Left cardiac atrium (tissue), 4 donors: ENCODE measurements at regions of chr16 and their contacts with region 1.

Region 1: DNA sequence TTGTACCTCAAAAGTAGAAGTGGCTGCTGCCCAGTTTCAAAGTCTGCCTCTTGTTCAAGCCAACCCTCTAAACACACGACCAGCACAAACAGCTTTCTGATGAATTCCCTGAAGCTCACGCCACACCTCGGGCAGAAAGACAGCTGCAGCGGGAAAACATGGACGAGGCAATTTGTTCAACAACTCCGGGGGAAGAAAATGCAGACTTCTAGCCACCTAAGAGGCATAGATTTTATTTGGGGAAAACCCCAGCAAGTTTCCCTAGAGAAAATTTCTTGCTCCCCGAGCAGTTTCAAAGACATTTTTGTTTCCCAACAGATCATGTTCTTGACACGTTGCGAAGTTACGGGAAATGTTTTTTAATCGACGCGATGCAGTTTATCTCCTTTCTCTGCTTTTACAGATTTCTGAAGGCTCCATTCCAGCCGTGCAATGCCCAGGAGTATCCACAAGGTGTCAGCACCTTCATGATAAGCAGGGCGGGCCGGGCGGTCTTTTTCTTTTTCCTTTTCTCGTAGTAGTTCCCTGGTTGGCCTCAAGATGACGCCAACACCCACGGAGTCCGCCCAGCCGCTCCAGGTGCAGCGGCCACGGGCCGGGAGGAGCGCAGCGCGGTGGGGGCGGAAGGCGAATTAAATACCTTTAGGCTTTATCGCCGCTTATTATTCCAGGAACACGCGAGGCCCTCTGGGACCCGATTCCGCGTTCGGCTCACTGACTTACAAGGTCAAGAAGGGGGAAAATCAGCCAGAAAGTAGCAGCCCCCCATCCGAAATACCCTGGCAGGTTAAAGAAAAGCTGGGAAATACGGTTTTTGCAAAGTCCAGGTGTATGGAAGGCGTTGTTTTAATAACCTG is 2.9 kb upstream of the FOXC2 start:
- DNase-seq: peak; percentile 90
- ATAC-seq: peak; percentile 56 to 74

Region 2: DNA sequence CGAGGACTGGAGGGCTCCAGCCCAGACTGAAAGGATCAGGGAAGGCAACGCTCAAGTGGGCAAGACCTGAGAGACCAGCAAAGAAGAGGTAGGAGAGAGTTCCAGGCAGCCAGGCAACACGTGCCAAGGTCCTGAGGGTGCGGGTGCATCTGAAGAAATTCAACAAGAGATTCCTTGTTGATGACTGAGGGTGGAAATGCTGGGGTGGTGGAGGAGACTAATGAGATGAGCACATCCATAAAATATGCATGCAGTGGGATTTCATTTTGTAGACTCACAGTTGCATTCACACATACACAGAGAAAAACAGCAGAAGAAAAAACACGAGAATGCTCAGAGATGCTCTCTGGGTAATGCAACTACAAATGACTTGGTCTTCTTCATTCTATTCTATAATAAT is 208.2 kb before region 1 on chr16:
- intact Hi-C with region 1: no loop called
- DNase-seq: no peak
- ATAC-seq: no peak

Region 3: GRCh38 chr16:87278191-87279095 is 714.7 kb after region 1 on chr16:
- intact Hi-C with region 1: loop called (anchors 2 to 5 kb)
- DNase-seq: peak; percentile 80
- ATAC-seq: peak; percentile 95 to 99